Cardiac septum (tissue), 1 donor: ENCODE measurements at regions of chr9 and their contacts with region 1.

Region 1: GRCh38 chr9:34899535-34900158 is 58.4 kb upstream of the PHF24 start:
- DNase-seq: peak; percentile 86

Region 2: GRCh38 chr9:34948451-34948850 is 48.8 kb after region 1 on chr9:
- intact Hi-C with region 1: no loop called
- DNase-seq: no peak

Region 3: DNA sequence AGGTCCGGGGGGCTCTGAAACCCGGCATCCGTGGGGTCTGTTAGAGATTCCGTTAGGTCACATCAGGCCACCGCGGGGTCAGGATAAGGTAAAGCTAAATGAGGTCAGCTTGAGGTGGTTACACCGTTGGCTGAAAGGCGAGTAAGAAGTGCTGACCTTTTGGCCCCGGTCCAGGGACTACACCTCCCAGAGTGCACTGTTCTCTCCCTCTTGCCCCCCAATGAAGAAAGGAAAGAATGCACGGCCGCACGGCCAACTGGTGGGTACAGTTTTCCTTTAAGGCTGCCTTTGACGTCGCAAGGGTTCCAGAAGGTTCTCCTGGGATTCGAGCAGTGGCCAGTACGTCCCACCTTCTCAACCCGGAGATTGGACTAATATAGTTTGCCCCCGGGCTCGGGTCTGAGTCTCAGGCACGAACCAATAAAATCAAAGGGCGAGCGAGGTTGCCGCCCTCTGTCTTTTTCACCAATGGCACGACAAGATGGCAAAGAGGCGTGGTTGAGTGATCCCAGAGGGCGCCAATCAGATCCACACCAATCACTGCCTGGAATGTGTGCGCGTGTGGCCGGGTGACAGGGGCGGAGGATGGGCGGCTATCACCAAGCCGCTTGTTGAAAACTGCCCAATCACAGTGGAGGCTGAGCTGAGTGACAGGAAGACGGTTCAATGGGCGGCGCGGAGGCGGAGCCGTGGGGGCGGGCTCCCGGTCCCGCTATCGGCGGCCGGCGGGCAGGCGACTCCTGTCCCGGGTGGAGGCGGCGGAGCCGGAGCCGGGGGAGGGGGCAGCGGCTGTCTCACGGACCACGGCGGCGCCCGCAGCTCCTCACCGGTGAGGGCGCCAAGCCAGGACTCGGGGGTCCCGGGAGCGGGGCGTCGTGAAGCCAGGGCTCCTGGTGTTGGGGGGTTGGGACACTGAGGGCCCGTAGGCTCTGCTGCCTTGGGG is 89.6 kb after region 1 on chr9 and contains the start of gene DNAJB5:
- intact Hi-C with region 1: loop called (anchors 2 kb)
- DNase-seq: peak; percentile 99
- total RNA-seq, gene DNAJB5: 133 TPM

Region 4: DNA sequence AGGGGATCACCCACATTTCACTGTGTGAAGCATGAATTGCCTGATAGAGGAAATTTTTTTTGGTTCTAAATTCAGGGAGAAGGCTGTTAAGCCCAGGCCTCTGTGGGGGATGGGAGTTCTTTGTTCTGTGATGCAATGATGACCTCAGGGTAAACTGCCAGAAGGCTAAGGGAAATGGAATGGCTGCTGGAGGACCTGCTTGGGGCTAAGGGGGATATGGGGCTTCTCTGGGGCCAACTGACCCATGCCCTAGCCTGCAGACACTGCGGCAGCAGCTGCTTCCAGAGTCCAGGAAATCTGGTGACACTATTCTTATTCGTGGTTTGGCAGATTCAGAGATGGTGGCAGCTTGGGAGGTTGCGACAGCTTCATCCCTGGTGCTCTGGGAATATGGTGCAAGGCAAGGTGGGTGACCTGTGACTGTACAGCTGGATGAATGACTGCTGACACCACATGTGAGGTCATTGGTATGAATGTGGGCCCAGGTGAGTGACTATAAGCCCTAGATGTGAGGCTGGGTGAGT is 142.5 kb after region 1 on chr9:
- intact Hi-C with region 1: no loop called
- DNase-seq: no peak

Region 5: DNA sequence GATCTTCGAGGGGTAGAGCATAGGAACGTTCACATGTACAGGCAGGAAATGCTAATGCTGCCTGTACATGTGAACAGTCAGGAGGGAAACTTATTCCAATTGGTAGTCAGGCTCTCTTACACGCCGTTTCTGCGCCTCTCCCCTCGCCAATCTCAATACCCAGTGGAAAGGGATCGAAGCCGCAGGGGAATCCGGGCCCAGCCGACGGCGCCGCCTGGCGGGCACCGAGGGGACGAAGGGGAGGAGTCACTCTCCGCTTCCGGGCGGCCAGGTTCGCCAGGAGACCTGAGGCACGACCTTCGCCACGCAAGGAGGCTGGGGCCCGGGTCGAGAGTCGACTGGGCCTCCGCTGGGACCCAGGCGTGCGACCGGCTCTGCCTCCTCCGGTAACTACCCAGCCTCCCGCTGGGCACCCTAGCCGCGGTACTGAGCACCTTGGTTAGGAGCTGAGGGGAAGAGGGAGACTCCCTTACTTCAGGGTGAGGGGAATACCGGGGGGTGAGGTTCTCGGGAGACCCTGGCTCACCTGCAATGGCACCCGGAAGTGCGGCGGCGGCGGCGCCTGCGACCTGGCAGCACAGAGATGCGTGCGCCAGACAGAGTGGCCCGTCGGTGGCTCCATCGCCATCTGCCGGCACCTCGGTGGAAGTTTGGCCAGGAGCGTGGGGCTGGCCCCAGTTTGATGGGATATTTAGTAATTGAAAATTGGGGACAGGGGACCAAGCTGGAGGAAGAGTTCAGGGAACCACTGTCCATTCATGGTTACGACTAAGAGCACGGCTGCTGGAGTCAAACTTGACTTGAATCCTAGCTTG is 196.6 kb after region 1 on chr9 and contains the start of gene PIGO:
- intact Hi-C with region 1: loop called (anchors 5 kb)
- DNase-seq: peak; percentile 94
- total RNA-seq, gene PIGO: 9.3 TPM